ENCODE measurements at regions of chr6 and their contacts with region 1.

Region 1: GRCh38 chr6:21220271-21220987 is 373.1 kb upstream of the SOX4 start:
- DNase-seq: peak; percentile 63 to 98
- H3K4me3 ChIP-seq: peak overlapping the region; percentile 28; the same call in 1 of the 2 replicates
- H3K27ac ChIP-seq: peak overlapping the region; percentile 95
- H3K4me1 ChIP-seq: peaks cover 30% of the 10 kb centered on the region
- H3K27me3 ChIP-seq: no peaks in the 10 kb centered on the region
- CTCF ChIP-seq: no peak

Region 2: DNA sequence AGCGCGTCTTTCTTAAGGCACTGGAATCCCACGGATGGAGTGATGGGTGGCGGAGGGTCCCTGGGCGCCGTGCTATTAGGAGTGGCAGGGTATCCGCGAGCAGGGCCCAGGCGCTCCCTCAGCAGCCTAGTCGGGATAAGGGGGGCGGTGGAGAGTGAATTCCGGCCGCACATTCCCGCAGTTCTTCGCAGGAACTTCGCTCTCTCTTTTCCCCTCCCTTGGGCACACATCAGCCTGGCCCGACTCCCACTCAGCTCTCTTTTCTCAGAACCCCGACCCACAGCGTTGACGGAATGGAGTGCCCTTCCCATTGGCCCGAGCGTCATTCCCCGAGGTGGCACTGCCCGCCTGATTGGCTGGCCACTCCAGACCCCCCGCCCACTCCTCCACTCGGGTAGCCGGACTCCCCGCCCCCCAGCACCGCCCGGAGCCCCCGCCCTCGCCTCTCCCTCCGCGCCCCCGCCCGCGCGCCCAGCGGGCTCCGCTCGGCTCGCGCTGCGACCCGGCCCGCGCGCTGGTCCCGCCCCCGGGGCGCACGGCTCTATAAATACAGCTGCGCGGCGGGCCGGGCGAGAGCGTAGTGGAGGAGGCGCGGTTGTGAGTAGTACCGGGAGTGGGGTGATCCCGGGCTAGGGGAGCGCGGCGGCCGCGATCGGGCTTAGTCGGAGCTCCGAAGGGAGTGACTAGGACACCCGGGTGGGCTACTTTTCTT is 1383.5 kb before region 1 on chr6 and contains the start of gene ID4:
- CTCF ChIA-PET with region 1: no interaction called
- POLR2A ChIA-PET with region 1: interaction called, 10 read pairs
- intact Hi-C with region 1: no loop called
- DNase-seq: peak in 1 of 2 experiments; percentile 83
- H3K4me3 ChIP-seq: peak within 1 kb of the TSS; percentile 66
- H3K27ac ChIP-seq: no peak within 1 kb of the TSS
- H3K4me1 ChIP-seq: peaks cover 13% of the 10 kb centered on the region
- H3K27me3 ChIP-seq: peaks cover 17% of the 10 kb centered on the region
- CTCF ChIP-seq: no peak
- total RNA-seq, gene ID4: 4.4 and 5.9 TPM in 2 replicates

Region 3: GRCh38 chr6:20877008-20877937 is 343.2 kb before region 1 on chr6:
- CTCF ChIA-PET with region 1: no interaction called
- POLR2A ChIA-PET with region 1: no interaction called
- intact Hi-C with region 1: loop called (anchors 1 kb)
- DNase-seq: peak; percentile 89 to 99
- H3K4me3 ChIP-seq: 0 out of 2 replicates have a peak overlapping the region, but pooled peaks have one; percentile 0
- H3K27ac ChIP-seq: peak overlapping the region; percentile 90
- H3K4me1 ChIP-seq: peaks cover 42% of the 10 kb centered on the region
- H3K27me3 ChIP-seq: no peaks in the 10 kb centered on the region
- CTCF ChIP-seq: no peak

Region 4: DNA sequence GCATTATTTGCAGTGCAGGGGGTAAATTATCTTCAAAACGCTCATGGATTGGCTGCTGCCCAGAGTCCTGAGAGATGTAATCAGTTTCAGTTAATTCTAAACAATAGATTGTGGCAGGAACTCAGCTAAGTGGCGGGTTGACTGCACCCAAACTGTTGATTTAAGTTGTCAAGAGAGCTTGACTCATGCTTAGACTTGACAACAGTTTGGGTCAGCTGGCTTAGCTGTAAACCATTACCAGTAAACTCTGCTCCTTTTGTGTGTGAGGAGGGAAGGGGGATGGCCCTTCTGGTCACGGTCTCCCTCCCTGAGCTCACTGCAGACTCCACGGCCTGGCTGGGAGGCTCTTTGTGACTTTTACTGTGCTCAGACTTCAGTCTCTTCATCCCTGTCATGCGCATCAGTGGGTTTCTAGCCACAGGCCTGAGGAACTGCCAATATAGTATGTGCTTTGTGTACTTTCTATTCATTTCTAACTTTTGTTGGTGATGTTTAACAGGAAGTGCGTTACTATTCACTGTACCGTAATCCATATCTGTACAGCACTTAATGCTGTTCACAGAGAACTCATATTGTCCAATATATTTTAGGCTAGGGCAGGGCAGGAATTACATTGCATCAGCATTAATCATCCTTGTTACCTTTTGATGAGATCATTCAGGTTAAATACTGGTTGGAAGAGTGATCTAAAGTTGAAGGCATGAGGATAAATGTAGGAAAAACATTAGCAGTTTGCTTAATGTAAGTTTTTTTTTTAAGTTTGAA is 197.9 kb before region 1 on chr6:
- CTCF ChIA-PET with region 1: no interaction called
- POLR2A ChIA-PET with region 1: interaction called, 3 read pairs
- intact Hi-C with region 1: loop called (anchors 1 kb)
- DNase-seq: peak; percentile 62 to 77
- H3K4me3 ChIP-seq: no peak overlapping the region
- H3K27ac ChIP-seq: peak overlapping the region; percentile 78
- H3K4me1 ChIP-seq: peaks cover 26% of the 10 kb centered on the region
- H3K27me3 ChIP-seq: no peaks in the 10 kb centered on the region
- CTCF ChIP-seq: no peak

Region 5: GRCh38 chr6:21109391-21110178 is 110.8 kb before region 1 on chr6:
- CTCF ChIA-PET with region 1: no interaction called
- POLR2A ChIA-PET with region 1: interaction called, 3 read pairs
- intact Hi-C with region 1: loop called (anchors 2 kb)
- DNase-seq: peak; percentile 20 to 86
- H3K4me3 ChIP-seq: no peak overlapping the region
- H3K27ac ChIP-seq: peak overlapping the region; percentile 32
- H3K4me1 ChIP-seq: peaks cover 48% of the 10 kb centered on the region
- H3K27me3 ChIP-seq: no peaks in the 10 kb centered on the region
- CTCF ChIP-seq: no peak

Region 6: GRCh38 chr6:21277601-21278374 is 57.4 kb after region 1 on chr6:
- CTCF ChIA-PET with region 1: no interaction called
- POLR2A ChIA-PET with region 1: no interaction called
- intact Hi-C with region 1: loop called (anchors 1 kb)
- DNase-seq: peak; percentile 62 to 74
- H3K4me3 ChIP-seq: no peak overlapping the region
- H3K27ac ChIP-seq: no peak overlapping the region
- H3K4me1 ChIP-seq: 0 out of 2 replicates have a peak, but pooled peaks cover 3% of the 10 kb centered on the region
- H3K27me3 ChIP-seq: no peaks in the 10 kb centered on the region
- CTCF ChIP-seq: no peak

Region 7: GRCh38 chr6:21381335-21382217 is 161.1 kb after region 1 on chr6:
- CTCF ChIA-PET with region 1: no interaction called
- POLR2A ChIA-PET with region 1: no interaction called
- intact Hi-C with region 1: loop called (anchors 5 kb)
- DNase-seq: peak; percentile 59 to 91
- H3K4me3 ChIP-seq: no peak overlapping the region
- H3K27ac ChIP-seq: peak overlapping the region; percentile 93
- H3K4me1 ChIP-seq: peaks cover 59% of the 10 kb centered on the region
- H3K27me3 ChIP-seq: no peaks in the 10 kb centered on the region
- CTCF ChIP-seq: no peak